Activated CD8-positive, alpha-beta memory T cell treated with anti-CD3 and anti-CD28 coated beads, Interleukin-2, amount 10 ng/mL, durations not matched to agents 7 days and 5 days (primary cell): ENCODE measurements at regions of chr10 and their contacts with region 1.

Region 1: GRCh38 chr10:102225646-102226541 is at the start of gene ELOVL3:
- DNase-seq: peak; percentile 94
- ATAC-seq: peak; percentile 96
- H3K4me3 Mint-ChIP-seq: peak within 1 kb of the TSS; percentile 59
- H3K27ac Mint-ChIP-seq: no peak within 1 kb of the TSS
- H3K4me1 Mint-ChIP-seq: peaks cover 19% of the 10 kb centered on the region
- H3K27me3 Mint-ChIP-seq: peaks cover 73% of the 10 kb centered on the region
- total RNA-seq, gene ELOVL3: not detected

Region 2: GRCh38 chr10:101932183-101932582 is 293.7 kb before region 1 on chr10:
- CTCF ChIA-PET with region 1: no interaction called
- DNase-seq: no peak
- ATAC-seq: no peak
- H3K4me3 Mint-ChIP-seq: no peak overlapping the region
- H3K27ac Mint-ChIP-seq: no peak overlapping the region
- H3K4me1 Mint-ChIP-seq: peaks cover 16% of the 10 kb centered on the region
- H3K27me3 Mint-ChIP-seq: no peaks in the 10 kb centered on the region

Region 3: GRCh38 chr10:102159051-102159597 is 66.8 kb before region 1 on chr10:
- CTCF ChIA-PET with region 1: interaction called, 17 read pairs
- DNase-seq: no peak
- ATAC-seq: no peak
- H3K4me3 Mint-ChIP-seq: no peak overlapping the region
- H3K27ac Mint-ChIP-seq: peak overlapping the region; percentile 62
- H3K4me1 Mint-ChIP-seq: peaks cover 29% of the 10 kb centered on the region
- H3K27me3 Mint-ChIP-seq: no peaks in the 10 kb centered on the region

Region 4: DNA sequence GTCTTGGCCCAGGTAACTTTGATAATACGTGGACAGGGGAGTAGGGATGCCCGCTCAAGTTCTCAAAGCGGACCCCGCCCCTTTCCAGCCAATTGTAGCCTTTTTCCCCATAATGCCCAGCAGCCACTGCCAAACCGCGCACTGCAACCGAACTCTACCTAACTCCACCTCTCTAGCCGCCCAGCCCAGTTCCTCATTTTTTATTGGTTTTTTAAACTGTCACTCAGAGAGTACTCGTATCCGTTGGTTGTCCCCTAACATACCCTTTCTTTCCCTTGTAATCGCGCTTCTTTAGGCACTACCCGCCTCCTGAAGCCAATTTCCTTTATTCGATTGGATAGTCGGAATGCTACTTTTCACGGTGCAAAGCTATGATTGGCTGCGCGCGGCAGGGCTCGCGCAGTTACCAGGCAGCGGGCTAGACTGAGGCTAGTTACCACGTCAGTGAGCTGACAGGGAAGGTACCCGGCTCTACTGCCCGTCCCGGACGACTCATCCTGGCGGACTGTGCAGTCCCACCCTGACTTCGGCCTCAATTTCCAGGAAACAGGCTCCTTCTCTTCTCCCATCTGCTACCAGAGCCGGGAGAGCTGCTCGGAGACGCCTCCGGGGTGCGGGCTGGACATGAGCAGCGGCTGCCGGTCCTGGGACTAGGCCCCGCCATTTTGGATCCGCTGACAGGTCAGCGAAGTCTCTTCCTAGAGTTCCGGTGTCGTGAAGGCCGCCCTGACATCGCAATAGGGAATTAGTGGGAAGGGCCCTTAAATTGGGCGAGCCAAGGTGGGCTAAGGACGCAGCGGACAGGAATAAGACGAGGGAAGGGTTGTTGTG is 19.4 kb after region 1 on chr10 and contains the start of gene GBF1:
- CTCF ChIA-PET with region 1: interaction called, 86 read pairs
- DNase-seq: peak; percentile 96
- ATAC-seq: peak; percentile 87
- H3K4me3 Mint-ChIP-seq: peak within 1 kb of the TSS; percentile 97
- H3K27ac Mint-ChIP-seq: peak within 1 kb of the TSS; percentile 91
- H3K4me1 Mint-ChIP-seq: peaks cover 46% of the 10 kb centered on the region
- H3K27me3 Mint-ChIP-seq: peaks cover 18% of the 10 kb centered on the region
- total RNA-seq, gene GBF1: 46.5 to 51.6 TPM

Region 5: GRCh38 chr10:102310361-102311024 is 84.6 kb after region 1 on chr10:
- CTCF ChIA-PET with region 1: interaction called, 16 read pairs
- DNase-seq: no peak
- ATAC-seq: no peak
- H3K4me3 Mint-ChIP-seq: no peak overlapping the region
- H3K27ac Mint-ChIP-seq: no peak overlapping the region
- H3K4me1 Mint-ChIP-seq: peaks cover 26% of the 10 kb centered on the region
- H3K27me3 Mint-ChIP-seq: no peaks in the 10 kb centered on the region

Region 6: GRCh38 chr10:102368072-102368471 is 142.2 kb after region 1 on chr10:
- CTCF ChIA-PET with region 1: interaction called, 824 read pairs
- DNase-seq: no peak
- ATAC-seq: no peak
- H3K4me3 Mint-ChIP-seq: no peak overlapping the region
- H3K27ac Mint-ChIP-seq: no peak overlapping the region
- H3K4me1 Mint-ChIP-seq: no peaks in the 10 kb centered on the region
- H3K27me3 Mint-ChIP-seq: no peaks in the 10 kb centered on the region

Region 7: DNA sequence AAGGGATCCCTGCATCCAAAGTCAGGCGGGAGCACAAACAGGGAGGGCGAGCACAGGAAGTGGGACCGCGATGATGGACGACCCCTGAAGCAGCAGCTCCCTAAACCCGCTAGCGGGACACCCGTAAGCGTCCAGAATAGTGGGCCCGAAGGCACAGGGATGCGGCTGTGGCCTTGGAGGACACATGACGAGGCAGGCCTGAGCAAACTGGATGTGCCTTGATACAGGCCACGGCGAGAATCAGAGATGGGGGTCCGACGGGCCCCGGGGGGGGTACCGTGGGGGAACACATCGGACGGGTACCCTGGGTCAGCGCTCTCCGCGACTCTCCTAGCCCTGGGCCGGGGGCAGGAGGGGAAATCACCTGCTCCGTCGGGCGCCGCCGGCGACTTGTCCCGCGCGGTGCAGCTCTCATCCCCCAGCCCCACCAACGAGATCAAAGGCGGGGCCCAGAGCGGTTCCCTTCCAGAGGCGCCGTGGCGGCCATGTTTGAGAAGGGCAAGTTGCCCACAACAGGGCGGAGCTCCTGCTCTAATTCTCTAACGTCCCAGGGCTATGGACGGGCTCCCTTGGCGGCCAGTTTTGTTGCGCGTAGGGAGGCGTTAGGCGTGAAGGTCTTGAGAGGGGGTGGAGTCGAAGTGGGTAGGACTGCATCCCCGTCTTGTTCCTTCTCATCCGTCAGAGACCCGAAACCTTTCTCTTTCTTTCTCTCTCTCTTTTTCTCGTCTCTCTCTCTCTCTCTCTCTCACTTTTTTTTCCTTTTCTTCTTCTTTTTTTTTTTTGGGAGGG is 206.5 kb after region 1 on chr10 and contains the start of gene CUEDC2:
- CTCF ChIA-PET with region 1: interaction called, 16 read pairs
- DNase-seq: peak; percentile 99
- ATAC-seq: peak; percentile 95
- H3K4me3 Mint-ChIP-seq: peak within 1 kb of the TSS; percentile 91
- H3K27ac Mint-ChIP-seq: peak within 1 kb of the TSS; percentile 95
- H3K4me1 Mint-ChIP-seq: peaks cover 53% of the 10 kb centered on the region
- H3K27me3 Mint-ChIP-seq: no peaks in the 10 kb centered on the region
- total RNA-seq, gene CUEDC2: 73.5 to 78.2 TPM

Region 8: DNA sequence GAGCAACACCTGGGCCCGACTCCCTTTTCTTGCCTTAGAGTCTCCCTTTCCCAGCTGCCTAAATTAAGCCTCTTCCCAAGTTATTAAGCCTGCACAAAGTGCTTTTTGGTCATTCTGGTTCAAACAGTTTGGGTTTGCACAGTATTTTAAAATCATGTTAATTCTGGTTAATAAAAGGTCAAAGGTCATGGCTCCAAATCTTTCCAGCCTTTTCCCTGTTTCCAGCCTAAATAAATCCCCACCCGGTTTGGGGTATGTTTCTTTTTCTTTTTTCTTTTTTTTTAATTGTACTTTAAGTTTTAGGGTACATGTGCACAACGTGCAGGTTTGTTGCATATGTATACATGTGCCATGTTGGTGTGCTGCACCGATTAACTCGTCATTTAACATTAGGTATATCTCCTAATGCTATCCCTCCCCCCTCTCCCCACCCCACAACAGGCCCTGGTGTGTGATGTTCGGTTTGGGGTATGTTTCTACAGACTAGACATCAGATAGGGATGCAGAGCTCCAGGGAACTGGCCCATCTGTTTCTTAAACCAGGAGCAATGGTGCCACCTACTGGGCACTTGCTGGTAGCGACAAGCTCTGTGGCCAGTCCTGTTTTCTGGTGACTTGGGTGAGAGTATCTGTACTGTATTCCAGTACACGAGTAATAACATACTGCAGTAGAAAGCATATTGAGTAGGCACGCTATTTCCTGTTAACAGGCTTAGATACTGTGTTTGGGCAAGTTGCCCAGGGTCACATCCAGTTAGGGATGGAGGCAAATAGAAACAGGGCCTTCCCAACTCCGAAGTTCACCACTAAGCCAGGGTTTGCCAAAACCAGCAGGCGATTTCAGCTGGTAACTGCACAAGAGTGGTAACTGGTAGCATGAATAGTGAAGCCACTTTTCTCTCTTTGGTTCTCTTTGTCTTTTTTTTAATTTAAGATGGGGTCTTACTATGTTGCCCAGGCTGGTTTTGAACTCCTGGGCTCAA is 357.8 kb after region 1 on chr10:
- CTCF ChIA-PET with region 1: interaction called, 57 read pairs
- DNase-seq: peak; percentile 91
- ATAC-seq: peak; percentile 98
- H3K4me3 Mint-ChIP-seq: no peak overlapping the region
- H3K27ac Mint-ChIP-seq: no peak overlapping the region
- H3K4me1 Mint-ChIP-seq: peaks cover 5% of the 10 kb centered on the region
- H3K27me3 Mint-ChIP-seq: no peaks in the 10 kb centered on the region